ENCODE measurements at regions of chr3 and their contacts with region 1.

Region 1: DNA sequence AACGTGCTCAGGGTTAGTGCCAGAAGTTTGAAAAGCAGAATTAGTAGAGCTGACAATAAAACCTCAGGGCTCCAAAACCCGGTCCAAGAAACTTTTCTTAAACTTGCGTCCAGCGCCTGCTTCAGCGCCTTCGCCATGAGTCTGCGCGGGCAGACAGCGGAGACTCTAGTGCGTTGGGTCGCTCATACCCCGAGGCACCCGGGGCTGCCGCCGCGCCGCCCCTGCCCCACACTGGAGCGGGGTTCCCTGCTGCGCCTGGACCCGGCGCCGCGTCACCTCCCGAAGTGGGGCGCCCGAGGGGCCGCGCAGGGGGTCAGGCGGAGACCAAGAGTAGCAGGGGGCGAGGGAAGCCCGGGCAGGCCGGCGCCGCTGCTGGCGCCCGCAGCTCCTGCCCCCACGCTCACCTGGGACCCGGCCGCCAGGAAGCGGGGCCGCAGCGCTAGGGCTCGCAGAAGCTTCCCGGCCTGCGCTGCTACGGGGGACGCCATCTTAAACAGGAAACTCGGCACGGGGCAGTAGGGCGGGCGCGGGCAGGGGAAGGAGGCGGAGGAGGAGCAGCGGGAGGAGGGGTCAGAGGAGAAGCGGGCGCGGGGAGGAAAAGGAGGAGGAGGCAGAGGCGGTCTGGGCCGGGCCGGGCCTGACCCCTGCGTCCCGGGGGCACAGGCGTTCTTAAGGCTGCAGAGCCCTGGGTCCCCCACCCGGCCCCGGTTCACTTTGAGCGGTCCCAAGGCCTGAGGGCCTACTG is at the start of gene SUCLG2:
- DNase-seq: peak; percentile 67 to 89 (median 78)
- ATAC-seq: peak; percentile 66
- H3K4me3 ChIP-seq: peak within 1 kb of the TSS; percentile 76
- H3K4me3 Mint-ChIP-seq: peak within 1 kb of the TSS; percentile 93
- H3K27ac ChIP-seq: peak within 1 kb of the TSS; percentile 56 to 77
- H3K27ac Mint-ChIP-seq: peak within 1 kb of the TSS; percentile 97
- H3K4me1 ChIP-seq: peaks cover 44% of the 10 kb centered on the region
- H3K4me1 Mint-ChIP-seq: peaks cover 85% of the 10 kb centered on the region
- H3K27me3 ChIP-seq: no peaks in the 10 kb centered on the region
- H3K27me3 Mint-ChIP-seq: no peaks in the 10 kb centered on the region
- CTCF ChIP-seq: no peak
- total RNA-seq, gene SUCLG2: 51.7 to 52.4 TPM

Region 2: GRCh38 chr3:66998113-66998903 is 656.0 kb before region 1 on chr3 and contains the start of gene KBTBD8:
- CTCF ChIA-PET with region 1: no interaction called
- POLR2A ChIA-PET with region 1: interaction called, 4 read pairs
- intact Hi-C with region 1: loop called (anchors 5 to 10 kb)
- DNase-seq: peak; percentile 7 to 99 (median 95)
- ATAC-seq: peak; percentile 94
- H3K4me3 ChIP-seq: peak within 1 kb of the TSS; percentile 73
- H3K4me3 Mint-ChIP-seq: peak within 1 kb of the TSS; percentile 98
- H3K27ac ChIP-seq: peak within 1 kb of the TSS; percentile 53 to 67
- H3K27ac Mint-ChIP-seq: peak within 1 kb of the TSS; percentile 89
- H3K4me1 ChIP-seq: peaks cover 16% of the 10 kb centered on the region
- H3K4me1 Mint-ChIP-seq: peaks cover 39% of the 10 kb centered on the region
- H3K27me3 ChIP-seq: peaks cover 0 to 18% of the 10 kb centered on the region in 2 experiments
- H3K27me3 Mint-ChIP-seq: peaks cover 34% of the 10 kb centered on the region
- CTCF ChIP-seq: no peak
- total RNA-seq, gene KBTBD8: 7.1 to 7.7 TPM

Region 3: GRCh38 chr3:67640023-67640660 is 14.1 kb before region 1 on chr3:
- CTCF ChIA-PET with region 1: no interaction called
- POLR2A ChIA-PET with region 1: interaction called, 12 read pairs
- intact Hi-C with region 1: no loop called
- DNase-seq: no peak
- ATAC-seq: no peak
- H3K4me3 ChIP-seq: no peak overlapping the region
- H3K4me3 Mint-ChIP-seq: no peak overlapping the region
- H3K27ac ChIP-seq: no peak overlapping the region
- H3K27ac Mint-ChIP-seq: no peak overlapping the region
- H3K4me1 ChIP-seq: peaks cover 11% of the 10 kb centered on the region
- H3K4me1 Mint-ChIP-seq: peaks cover 96% of the 10 kb centered on the region
- H3K27me3 ChIP-seq: no peaks in the 10 kb centered on the region
- H3K27me3 Mint-ChIP-seq: no peaks in the 10 kb centered on the region
- CTCF ChIP-seq: no peak

Region 4: GRCh38 chr3:67739851-67740250 is 85.6 kb after region 1 on chr3:
- CTCF ChIA-PET with region 1: no interaction called
- POLR2A ChIA-PET with region 1: interaction called, 68 read pairs
- intact Hi-C with region 1: loop called in 1 of 2 experiments (anchors 5 kb)
- DNase-seq: no peak
- ATAC-seq: no peak
- H3K4me3 ChIP-seq: no peak overlapping the region
- H3K4me3 Mint-ChIP-seq: no peak overlapping the region
- H3K27ac ChIP-seq: peak overlapping the region in 1 of 2 donors; percentile 20
- H3K27ac Mint-ChIP-seq: peak overlapping the region; percentile 89
- H3K4me1 ChIP-seq: peaks cover 29% of the 10 kb centered on the region
- H3K4me1 Mint-ChIP-seq: peaks cover 86% of the 10 kb centered on the region
- H3K27me3 ChIP-seq: no peaks in the 10 kb centered on the region
- H3K27me3 Mint-ChIP-seq: no peaks in the 10 kb centered on the region
- CTCF ChIP-seq: no peak

Region 5: DNA sequence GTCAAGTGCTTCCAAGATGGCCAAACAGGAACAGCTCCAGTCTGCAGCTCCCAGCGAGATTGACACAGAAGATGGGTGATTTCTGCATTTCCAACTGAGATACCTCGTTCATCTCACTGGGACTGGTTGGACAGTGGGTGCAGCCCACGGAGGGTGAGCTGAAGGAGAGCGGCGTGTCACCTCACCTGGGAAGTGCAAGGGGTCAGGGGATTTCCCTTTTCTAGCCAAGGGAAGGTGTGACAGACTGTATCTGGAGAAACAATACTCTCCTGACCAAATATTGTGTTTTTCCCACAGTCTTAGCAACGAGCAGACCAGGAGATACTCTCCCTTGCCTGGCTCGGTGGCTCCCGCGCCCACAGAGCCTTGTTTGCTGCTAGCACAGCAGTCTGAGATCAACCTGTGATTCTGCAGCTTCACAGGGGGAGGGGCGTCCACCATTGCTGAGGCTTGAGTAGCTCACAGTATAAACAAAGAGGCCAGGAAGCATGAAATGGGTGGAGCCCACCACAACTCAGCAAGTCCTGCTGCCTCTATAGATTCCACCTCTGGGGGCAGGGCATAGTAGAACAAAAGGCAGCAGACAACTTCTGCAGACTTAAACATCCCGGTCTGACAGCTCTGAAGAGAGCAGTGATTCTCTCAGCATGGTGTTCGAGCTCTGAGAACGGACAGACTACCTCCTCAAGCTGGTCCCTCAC is 293.7 kb after region 1 on chr3:
- CTCF ChIA-PET with region 1: no interaction called
- POLR2A ChIA-PET with region 1: interaction called, 10 read pairs
- intact Hi-C with region 1: loop called (anchors 10 kb)
- DNase-seq: peak; percentile 52 to 89 (median 67)
- ATAC-seq: peak; percentile 95
- H3K4me3 ChIP-seq: peak overlapping the region; percentile 49
- H3K4me3 Mint-ChIP-seq: peak overlapping the region; percentile 86
- H3K27ac ChIP-seq: no peak overlapping the region
- H3K27ac Mint-ChIP-seq: peak overlapping the region; percentile 87
- H3K4me1 ChIP-seq: peaks cover 16% of the 10 kb centered on the region
- H3K4me1 Mint-ChIP-seq: peaks cover 47% of the 10 kb centered on the region
- H3K27me3 ChIP-seq: no peaks in the 10 kb centered on the region
- H3K27me3 Mint-ChIP-seq: no peaks in the 10 kb centered on the region
- CTCF ChIP-seq: peak; percentile 24

Measured in CD4-positive, alpha-beta T cell (primary cell).